Sigmoid colon (tissue), 7 donors: ENCODE measurements at regions of chr17 and their contacts with region 1.

Region 1: GRCh38 chr17:1516388-1517161 is at the start of gene INPP5K:
- DNase-seq: peak; percentile 99
- H3K4me3 ChIP-seq: peak within 1 kb of the TSS; percentile 81 to 99 (median 90)
- H3K27ac ChIP-seq: peak within 1 kb of the TSS; percentile 91 to 98 (median 94)
- H3K4me1 ChIP-seq: peaks cover 0 to 49% (median 43%) of the 10 kb centered on the region in 4 donors
- H3K27me3 ChIP-seq: no peaks in the 10 kb centered on the region
- CTCF ChIP-seq: no peak
- EP300 ChIP-seq: no peak
- POLR2A ChIP-seq: peak in 1 of 2 donors; percentile 68
- total RNA-seq, gene INPP5K: 41.0 to 66.5 (median 58.7) TPM

Region 2: DNA sequence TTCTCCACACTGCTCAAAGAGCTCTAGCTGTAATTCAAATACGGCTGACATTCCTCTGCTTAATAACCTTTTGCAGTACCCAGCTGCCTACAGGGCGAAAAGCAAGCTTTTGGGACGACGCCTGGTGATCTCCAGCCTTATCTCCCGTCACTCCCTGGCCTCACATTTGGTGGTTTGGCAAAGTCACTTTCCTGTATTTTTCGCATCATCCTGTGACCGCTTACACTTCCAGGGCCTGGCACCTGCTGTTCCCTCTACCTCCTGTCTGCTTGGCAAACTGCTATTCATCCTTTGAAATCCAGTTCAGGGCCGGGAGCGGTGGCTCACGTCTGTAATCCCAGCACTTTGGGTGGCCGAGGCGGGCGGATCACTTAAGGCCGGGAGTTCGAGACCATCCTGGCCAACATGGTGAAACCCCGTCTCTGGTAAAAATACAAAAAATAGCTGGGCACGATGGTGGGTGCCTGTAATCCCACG is 249.1 kb before region 1 on chr17:
- intact Hi-C with region 1: loop called (anchors 2 kb)
- DNase-seq: no peak
- H3K4me3 ChIP-seq: peak overlapping the region; percentile 50 to 91 (median 72)
- H3K27ac ChIP-seq: peak overlapping the region; percentile 85 to 90 (median 89)
- H3K4me1 ChIP-seq: peaks cover 0 to 24% (median 19%) of the 10 kb centered on the region in 4 donors
- H3K27me3 ChIP-seq: peaks cover 19 to 34% (median 23%) of the 10 kb centered on the region in 3 donors
- CTCF ChIP-seq: no peak
- EP300 ChIP-seq: no peak
- POLR2A ChIP-seq: no peak

Region 3: DNA sequence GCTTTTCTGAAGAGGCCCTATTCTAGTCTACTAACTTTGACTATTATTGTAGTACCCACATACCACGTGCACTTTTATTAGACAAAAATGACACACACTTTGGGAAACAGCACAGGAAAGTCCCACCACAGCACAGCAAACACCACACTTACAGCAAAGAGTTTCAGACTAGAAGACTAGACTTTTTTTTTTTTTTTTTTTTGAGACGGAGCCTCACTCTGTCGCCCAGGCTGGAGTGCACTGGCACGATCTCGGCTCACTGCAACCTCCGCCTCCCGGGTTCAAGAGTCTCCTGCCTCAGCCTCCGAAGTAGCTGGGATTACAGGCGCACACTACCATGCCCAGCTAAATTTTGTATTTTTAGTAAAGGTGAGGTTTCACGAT is 136.7 kb before region 1 on chr17:
- intact Hi-C with region 1: no loop called
- DNase-seq: no peak
- H3K4me3 ChIP-seq: peak overlapping the region in 1 of 4 donors; percentile 9
- H3K27ac ChIP-seq: peak overlapping the region; percentile 37 to 83 (median 74)
- H3K4me1 ChIP-seq: peaks cover 0 to 99% (median 97%) of the 10 kb centered on the region in 4 donors
- H3K27me3 ChIP-seq: no peaks in the 10 kb centered on the region
- CTCF ChIP-seq: no peak
- EP300 ChIP-seq: no peak
- POLR2A ChIP-seq: no peak

Region 4: GRCh38 chr17:1455797-1456599 is 60.6 kb before region 1 on chr17 and contains the start of gene CRK:
- intact Hi-C with region 1: loop called (anchors 1 kb)
- DNase-seq: peak; percentile 98
- H3K4me3 ChIP-seq: peak within 1 kb of the TSS; percentile 64 to 98 (median 81)
- H3K27ac ChIP-seq: peak within 1 kb of the TSS; percentile 96 to 100 (median 98)
- H3K4me1 ChIP-seq: peaks cover 0 to 62% (median 55%) of the 10 kb centered on the region in 4 donors
- H3K27me3 ChIP-seq: no peaks in the 10 kb centered on the region
- CTCF ChIP-seq: no peak
- EP300 ChIP-seq: peak in 1 of 4 donors; percentile 38
- POLR2A ChIP-seq: peak; percentile 53 to 81
- total RNA-seq, gene CRK: 61.5 to 88.7 (median 76.1) TPM

Region 5: GRCh38 chr17:1488030-1488863 is 28.3 kb before region 1 on chr17:
- intact Hi-C with region 1: loop called (anchors 2 kb)
- DNase-seq: peak; percentile 94
- H3K4me3 ChIP-seq: peak overlapping the region; percentile 33 to 91 (median 88)
- H3K27ac ChIP-seq: peak overlapping the region; percentile 98 to 100 (median 99)
- H3K4me1 ChIP-seq: peaks cover 0 to 84% (median 80%) of the 10 kb centered on the region in 4 donors
- H3K27me3 ChIP-seq: no peaks in the 10 kb centered on the region
- CTCF ChIP-seq: peak in 2 of 4 experiments; percentile 8 to 9
- EP300 ChIP-seq: no peak
- POLR2A ChIP-seq: no peak

Region 6: GRCh38 chr17:1561400-1562175 is 45.0 kb after region 1 on chr17:
- intact Hi-C with region 1: loop called (anchors 5 kb)
- DNase-seq: no peak
- H3K4me3 ChIP-seq: peak overlapping the region; percentile 71 to 96 (median 92)
- H3K27ac ChIP-seq: peak overlapping the region; percentile 85 to 99 (median 96)
- H3K4me1 ChIP-seq: peaks cover 0 to 41% (median 38%) of the 10 kb centered on the region in 4 donors
- H3K27me3 ChIP-seq: no peaks in the 10 kb centered on the region
- CTCF ChIP-seq: peak in 3 of 4 experiments; percentile 5 to 42 (median 23)
- EP300 ChIP-seq: no peak
- POLR2A ChIP-seq: no peak

Region 7: GRCh38 chr17:1590031-1590748 is 73.6 kb after region 1 on chr17:
- intact Hi-C with region 1: no loop called
- DNase-seq: no peak
- H3K4me3 ChIP-seq: no peak overlapping the region
- H3K27ac ChIP-seq: peak overlapping the region; percentile 44 to 82 (median 72)
- H3K4me1 ChIP-seq: peaks cover 0 to 19% (median 17%) of the 10 kb centered on the region in 4 donors
- H3K27me3 ChIP-seq: no peaks in the 10 kb centered on the region
- CTCF ChIP-seq: no peak
- EP300 ChIP-seq: peak in 1 of 4 donors; percentile 23
- POLR2A ChIP-seq: no peak